HepG2 (cell line): ENCODE measurements at regions of chrX and their contacts with region 1.

Region 1: DNA sequence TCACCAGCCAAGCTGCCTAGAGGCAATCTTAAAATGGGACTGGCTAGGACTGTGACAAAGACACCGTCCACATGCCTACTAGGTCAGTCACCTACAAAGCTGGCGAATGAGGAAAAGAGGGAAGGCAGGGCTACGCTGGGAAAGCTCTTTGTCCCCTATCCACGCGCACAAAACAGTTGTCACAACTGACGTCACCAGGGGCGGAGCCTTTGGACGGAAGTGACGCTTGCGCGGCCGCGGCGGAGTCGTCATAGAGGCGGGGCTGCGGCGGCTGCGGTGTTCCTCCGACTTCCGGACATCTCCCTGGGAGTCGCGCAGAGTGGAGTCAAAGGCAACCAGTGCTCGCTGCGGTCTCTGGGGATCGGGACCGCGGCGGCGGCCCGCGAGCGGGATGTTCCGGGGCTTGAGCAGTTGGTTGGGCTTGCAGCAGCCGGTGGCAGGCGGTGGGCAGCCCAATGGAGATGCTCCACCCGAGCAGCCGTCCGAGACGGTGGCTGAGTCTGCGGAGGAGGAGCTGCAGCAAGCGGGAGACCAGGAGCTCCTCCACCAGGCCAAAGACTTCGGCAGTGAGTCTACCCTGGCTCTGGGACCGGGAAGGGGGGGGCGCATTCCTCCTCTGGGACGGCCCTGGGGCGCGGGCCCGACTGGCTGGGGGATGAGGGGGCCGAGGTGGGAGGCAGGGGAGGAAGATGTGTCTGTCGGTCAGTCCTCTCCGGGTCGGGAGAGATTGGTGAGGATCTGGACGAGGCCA is at the start of gene SYAP1:
- DNase-seq: peak; percentile 92
- ATAC-seq: peak; percentile 96
- H3K4me3 ChIP-seq: peak within 1 kb of the TSS; percentile 73 to 87 (median 81)
- H3K27ac ChIP-seq: peak within 1 kb of the TSS; percentile 98
- H3K4me1 ChIP-seq: peaks cover 35% of the 10 kb centered on the region
- H3K27me3 ChIP-seq: no peaks in the 10 kb centered on the region; a peak in 1 of 5 replicates
- CTCF ChIP-seq: 0 out of 2 replicates have a peak, but pooled peaks have one; percentile 10
- EP300 ChIP-seq: no peak
- POLR2A ChIP-seq: peak; percentile 90 to 95
- RAD21 ChIP-seq: 0 out of 2 replicates have a peak, but pooled peaks have one; percentile 11
- total RNA-seq, gene SYAP1: 18.5 and 25.3 TPM in 2 replicates

Region 2: GRCh38 chrX:14872851-14873675 is 1846.4 kb before region 1 on chrX and contains the starts of genes FANCB and MOSPD2:
- CTCF ChIA-PET with region 1: no interaction called
- POLR2A ChIA-PET with region 1: no interaction called
- in situ Hi-C with region 1: no loop called
- intact Hi-C with region 1: loop called (anchors 10 kb)
- DNase-seq: peak; percentile 90
- ATAC-seq: peak; percentile 99
- H3K4me3 ChIP-seq: peak within 1 kb of the TSS; percentile 67 to 83 (median 82)
- H3K27ac ChIP-seq: peak within 1 kb of the TSS; percentile 73
- H3K4me1 ChIP-seq: peaks cover 10% of the 10 kb centered on the region; the same call in 1 of the 2 replicates
- H3K27me3 ChIP-seq: no peaks in the 10 kb centered on the region; a peak in 1 of 5 replicates
- CTCF ChIP-seq: no peak
- EP300 ChIP-seq: no peak
- POLR2A ChIP-seq: peak; percentile 53 to 60; a peak in 3 of 4 replicates
- RAD21 ChIP-seq: no peak
- total RNA-seq, gene FANCB: 5.8 and 9.2 TPM in 2 replicates
- total RNA-seq, gene MOSPD2: 7.0 and 11.3 TPM in 2 replicates

Region 3: GRCh38 chrX:16633754-16634153 is 85.8 kb before region 1 on chrX:
- CTCF ChIA-PET with region 1: no interaction called
- POLR2A ChIA-PET with region 1: no interaction called
- in situ Hi-C with region 1: no loop called
- intact Hi-C with region 1: no loop called
- DNase-seq: no peak
- ATAC-seq: no peak
- H3K4me3 ChIP-seq: no peak overlapping the region
- H3K27ac ChIP-seq: no peak overlapping the region
- H3K4me1 ChIP-seq: no peaks in the 10 kb centered on the region
- H3K27me3 ChIP-seq: no peaks in the 10 kb centered on the region
- CTCF ChIP-seq: no peak
- EP300 ChIP-seq: no peak
- POLR2A ChIP-seq: no peak
- RAD21 ChIP-seq: no peak

Region 4: GRCh38 chrX:16743604-16744325 is 24.3 kb after region 1 on chrX:
- CTCF ChIA-PET with region 1: no interaction called
- POLR2A ChIA-PET with region 1: interaction called, 22 read pairs
- in situ Hi-C with region 1: no loop called
- intact Hi-C with region 1: no loop called
- DNase-seq: no peak
- ATAC-seq: peak; percentile 34; the same call in 2 of the 3 replicates
- H3K4me3 ChIP-seq: no peak overlapping the region
- H3K27ac ChIP-seq: no peak overlapping the region
- H3K4me1 ChIP-seq: peaks cover 32% of the 10 kb centered on the region
- H3K27me3 ChIP-seq: no peaks in the 10 kb centered on the region
- CTCF ChIP-seq: peak; percentile 42; the same call in 1 of the 2 replicates
- EP300 ChIP-seq: no peak
- POLR2A ChIP-seq: no peak
- RAD21 ChIP-seq: no peak

Region 5: DNA sequence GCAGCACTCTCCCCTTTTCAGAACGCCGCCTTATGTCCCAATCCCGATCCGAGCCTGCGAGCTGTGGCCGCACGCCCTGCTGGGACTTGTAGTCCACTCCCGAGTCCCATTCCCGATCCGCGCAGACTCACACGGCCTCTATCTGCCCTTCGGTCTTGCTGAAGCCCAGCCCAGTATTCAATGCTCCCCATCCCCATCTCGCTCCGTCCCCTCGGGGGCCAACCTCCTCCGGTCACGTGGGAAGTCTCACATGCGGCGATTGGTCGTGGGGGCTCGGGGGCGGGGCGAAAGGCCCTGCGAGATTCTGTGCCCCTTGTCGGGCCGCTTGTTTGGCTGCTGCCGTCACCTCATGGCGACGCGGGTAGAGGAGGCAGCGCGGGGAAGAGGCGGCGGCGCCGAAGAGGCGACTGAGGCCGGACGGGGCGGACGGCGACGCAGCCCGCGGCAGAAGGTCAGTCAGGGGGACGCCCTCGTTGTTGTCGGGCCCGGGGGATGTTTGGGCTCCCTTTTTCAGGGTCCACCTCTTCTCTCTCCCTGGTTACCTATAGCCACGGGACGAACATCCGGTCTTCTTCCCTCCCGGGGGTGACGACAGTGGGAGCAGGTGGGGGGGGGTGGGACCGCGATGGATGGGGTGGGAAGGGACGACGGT is 66.8 kb after region 1 on chrX and contains the start of gene TXLNG:
- CTCF ChIA-PET with region 1: no interaction called
- POLR2A ChIA-PET with region 1: interaction called, 5 read pairs
- in situ Hi-C with region 1: no loop called
- intact Hi-C with region 1: loop called (anchors 10 kb)
- DNase-seq: peak; percentile 95
- ATAC-seq: peak; percentile 97
- H3K4me3 ChIP-seq: peak within 1 kb of the TSS; percentile 69 to 84 (median 71)
- H3K27ac ChIP-seq: peak within 1 kb of the TSS; percentile 74
- H3K4me1 ChIP-seq: peaks cover 26% of the 10 kb centered on the region
- H3K27me3 ChIP-seq: no peaks in the 10 kb centered on the region
- CTCF ChIP-seq: no peak
- EP300 ChIP-seq: no peak
- POLR2A ChIP-seq: peak; percentile 72 to 80
- RAD21 ChIP-seq: no peak
- total RNA-seq, gene TXLNG: 13.1 and 17.8 TPM in 2 replicates